Caco-2 (cell line): ENCODE measurements at regions of chr12 and their contacts with region 1.

Region 1: GRCh38 chr12:58346032-58346632 is 404.8 kb downstream of the ATP23 start:
- DNase-seq: peak in 1 of 2 experiments; percentile 23
- H3K4me3 ChIP-seq: no peak overlapping the region
- H3K4me3 Mint-ChIP-seq: no peak overlapping the region
- H3K27ac Mint-ChIP-seq: no peak overlapping the region
- H3K4me1 ChIP-seq: peaks cover 17% of the 10 kb centered on the region
- H3K4me1 Mint-ChIP-seq: no peaks in the 10 kb centered on the region
- H3K27me3 ChIP-seq: no peaks in the 10 kb centered on the region
- H3K27me3 Mint-ChIP-seq: no peaks in the 10 kb centered on the region
- CTCF ChIP-seq: peak; percentile 72 to 79

Region 2: GRCh38 chr12:57983146-57983857 is 362.8 kb before region 1 on chr12:
- CTCF ChIA-PET with region 1: no interaction called
- POLR2A ChIA-PET with region 1: no interaction called
- intact Hi-C with region 1: loop called (anchors 10 kb)
- DNase-seq: peak in 1 of 2 experiments; percentile 50
- H3K4me3 ChIP-seq: no peak overlapping the region
- H3K4me3 Mint-ChIP-seq: no peak overlapping the region
- H3K27ac Mint-ChIP-seq: no peak overlapping the region
- H3K4me1 ChIP-seq: no peaks in the 10 kb centered on the region
- H3K4me1 Mint-ChIP-seq: no peaks in the 10 kb centered on the region
- H3K27me3 ChIP-seq: no peaks in the 10 kb centered on the region
- H3K27me3 Mint-ChIP-seq: no peaks in the 10 kb centered on the region
- CTCF ChIP-seq: peak; percentile 33 to 65

Region 3: GRCh38 chr12:58148405-58148804 is 197.7 kb before region 1 on chr12:
- CTCF ChIA-PET with region 1: no interaction called
- POLR2A ChIA-PET with region 1: no interaction called
- intact Hi-C with region 1: no loop called
- DNase-seq: no peak
- H3K4me3 ChIP-seq: no peak overlapping the region
- H3K4me3 Mint-ChIP-seq: no peak overlapping the region
- H3K27ac Mint-ChIP-seq: no peak overlapping the region
- H3K4me1 ChIP-seq: no peaks in the 10 kb centered on the region
- H3K4me1 Mint-ChIP-seq: no peaks in the 10 kb centered on the region
- H3K27me3 ChIP-seq: no peaks in the 10 kb centered on the region
- H3K27me3 Mint-ChIP-seq: no peaks in the 10 kb centered on the region
- CTCF ChIP-seq: no peak

Region 4: GRCh38 chr12:58425481-58426392 is 79.6 kb after region 1 on chr12:
- CTCF ChIA-PET with region 1: interaction called, 3 read pairs
- POLR2A ChIA-PET with region 1: no interaction called
- intact Hi-C with region 1: loop called (anchors 1 kb)
- DNase-seq: peak; percentile 47 to 69
- H3K4me3 ChIP-seq: no peak overlapping the region
- H3K4me3 Mint-ChIP-seq: peak overlapping the region; percentile 38
- H3K27ac Mint-ChIP-seq: peak overlapping the region; percentile 94
- H3K4me1 ChIP-seq: peaks cover 29% of the 10 kb centered on the region
- H3K4me1 Mint-ChIP-seq: peaks cover 11% of the 10 kb centered on the region
- H3K27me3 ChIP-seq: no peaks in the 10 kb centered on the region
- H3K27me3 Mint-ChIP-seq: no peaks in the 10 kb centered on the region
- CTCF ChIP-seq: no peak

Region 5: DNA sequence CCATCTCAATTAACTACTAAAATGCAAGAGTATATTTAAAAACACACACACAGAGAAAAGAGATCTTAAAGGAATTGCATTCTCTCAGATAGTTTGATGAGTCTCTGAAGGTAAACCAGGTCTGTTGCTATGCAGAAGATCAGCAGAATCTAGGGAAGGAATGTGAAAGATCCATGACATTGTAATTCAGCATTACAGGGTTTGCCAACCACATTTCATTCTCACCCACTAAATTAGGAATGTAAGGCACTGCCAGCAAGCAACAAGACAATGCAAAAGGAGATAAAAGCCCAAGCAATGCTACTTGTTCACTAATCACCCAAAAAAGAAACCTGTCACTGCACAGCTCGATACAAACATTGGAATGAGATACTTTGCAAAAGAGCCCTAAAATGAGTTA is 467.9 kb after region 1 on chr12:
- CTCF ChIA-PET with region 1: no interaction called
- POLR2A ChIA-PET with region 1: no interaction called
- intact Hi-C with region 1: loop called (anchors 10 kb)
- DNase-seq: no peak
- H3K4me3 ChIP-seq: no peak overlapping the region
- H3K4me3 Mint-ChIP-seq: no peak overlapping the region
- H3K27ac Mint-ChIP-seq: no peak overlapping the region
- H3K4me1 ChIP-seq: no peaks in the 10 kb centered on the region
- H3K4me1 Mint-ChIP-seq: peaks cover 9% of the 10 kb centered on the region
- H3K27me3 ChIP-seq: no peaks in the 10 kb centered on the region
- H3K27me3 Mint-ChIP-seq: no peaks in the 10 kb centered on the region
- CTCF ChIP-seq: no peak

Region 6: GRCh38 chr12:59087077-59087673 is 741.0 kb after region 1 on chr12:
- CTCF ChIA-PET with region 1: no interaction called
- POLR2A ChIA-PET with region 1: no interaction called
- intact Hi-C with region 1: loop called (anchors 1 kb)
- DNase-seq: no peak
- H3K4me3 ChIP-seq: no peak overlapping the region
- H3K4me3 Mint-ChIP-seq: no peak overlapping the region
- H3K27ac Mint-ChIP-seq: no peak overlapping the region
- H3K4me1 ChIP-seq: no peaks in the 10 kb centered on the region
- H3K4me1 Mint-ChIP-seq: no peaks in the 10 kb centered on the region
- H3K27me3 ChIP-seq: no peaks in the 10 kb centered on the region
- H3K27me3 Mint-ChIP-seq: no peaks in the 10 kb centered on the region
- CTCF ChIP-seq: peak in 1 of 2 experiments; percentile 14

Region 7: GRCh38 chr12:59164991-59165718 is 819.0 kb after region 1 on chr12:
- CTCF ChIA-PET with region 1: no interaction called
- POLR2A ChIA-PET with region 1: no interaction called
- intact Hi-C with region 1: loop called (anchors 5 kb)
- DNase-seq: peak in 1 of 2 experiments; percentile 32
- H3K4me3 ChIP-seq: no peak overlapping the region
- H3K4me3 Mint-ChIP-seq: no peak overlapping the region
- H3K27ac Mint-ChIP-seq: no peak overlapping the region
- H3K4me1 ChIP-seq: peaks cover 19% of the 10 kb centered on the region
- H3K4me1 Mint-ChIP-seq: peaks cover 14% of the 10 kb centered on the region
- H3K27me3 ChIP-seq: no peaks in the 10 kb centered on the region
- H3K27me3 Mint-ChIP-seq: no peaks in the 10 kb centered on the region
- CTCF ChIP-seq: peak in 1 of 2 experiments; percentile 31